Right ventricle myocardium inferior (tissue), 1 donor: ENCODE measurements at regions of chr12 and their contacts with region 1.

Region 1: GRCh38 chr12:116599285-116600136 is 40.3 kb downstream of the MAP1LC3B2 start:
- DNase-seq: peak; percentile 93
- ATAC-seq: peak; percentile 76

Region 2: DNA sequence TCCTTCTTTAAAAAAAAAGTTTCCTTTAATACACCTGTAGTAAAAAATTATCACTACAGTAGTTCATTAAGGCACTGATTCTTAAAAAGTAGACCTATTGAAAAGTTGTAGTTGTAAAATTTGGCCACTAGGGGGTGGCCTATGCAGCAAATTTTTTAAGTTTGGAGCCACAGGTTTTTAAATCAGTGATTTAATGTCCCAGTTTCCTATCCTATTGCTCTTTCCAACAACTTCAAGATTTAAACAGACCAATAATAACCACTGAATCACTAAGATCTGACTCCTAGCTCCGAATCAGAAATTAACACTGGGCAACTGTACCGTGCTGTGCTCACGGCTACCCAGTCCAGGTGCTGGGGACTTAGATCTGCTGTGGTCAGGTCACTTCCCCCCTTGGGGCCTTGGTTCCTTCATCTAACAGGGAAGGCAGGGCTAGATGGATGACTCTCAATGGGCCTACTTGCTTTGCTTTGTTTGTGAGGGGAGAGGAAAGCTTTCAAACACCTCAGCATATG is 601.3 kb before region 1 on chr12:
- intact Hi-C with region 1: loop called (anchors 5 kb)
- DNase-seq: no peak
- ATAC-seq: no peak

Region 3: GRCh38 chr12:116277393-116278278 is 321.9 kb before region 1 on chr12 and contains the start of gene MED13L:
- intact Hi-C with region 1: loop called (anchors 1 kb)
- DNase-seq: peak; percentile 94
- ATAC-seq: peak; percentile 96
- total RNA-seq, gene MED13L: 59.8 TPM

Region 4: GRCh38 chr12:116443821-116444589 is 155.5 kb before region 1 on chr12:
- intact Hi-C with region 1: no loop called
- DNase-seq: no peak
- ATAC-seq: no peak

Region 5: GRCh38 chr12:116455540-116456329 is 143.8 kb before region 1 on chr12:
- intact Hi-C with region 1: loop called (anchors 1 kb)
- DNase-seq: peak; percentile 84
- ATAC-seq: peak; percentile 94

Region 6: GRCh38 chr12:116677202-116677661 is 77.7 kb after region 1 on chr12:
- intact Hi-C with region 1: loop called (anchors 5 kb)
- DNase-seq: no peak
- ATAC-seq: no peak